ENCODE measurements at regions of chr7 and their contacts with region 1.

Region 1: GRCh38 chr7:100719523-100720319 is 547 bp upstream of the EPO start:
- DNase-seq: no peak
- ATAC-seq: peak; percentile 17
- H3K4me3 Mint-ChIP-seq: peak overlapping the region; percentile 65
- H3K27ac Mint-ChIP-seq: no peak overlapping the region
- H3K4me1 Mint-ChIP-seq: peaks cover 4% of the 10 kb centered on the region
- H3K27me3 Mint-ChIP-seq: peaks cover 62% of the 10 kb centered on the region
- CTCF ChIP-seq: no peak

Region 2: DNA sequence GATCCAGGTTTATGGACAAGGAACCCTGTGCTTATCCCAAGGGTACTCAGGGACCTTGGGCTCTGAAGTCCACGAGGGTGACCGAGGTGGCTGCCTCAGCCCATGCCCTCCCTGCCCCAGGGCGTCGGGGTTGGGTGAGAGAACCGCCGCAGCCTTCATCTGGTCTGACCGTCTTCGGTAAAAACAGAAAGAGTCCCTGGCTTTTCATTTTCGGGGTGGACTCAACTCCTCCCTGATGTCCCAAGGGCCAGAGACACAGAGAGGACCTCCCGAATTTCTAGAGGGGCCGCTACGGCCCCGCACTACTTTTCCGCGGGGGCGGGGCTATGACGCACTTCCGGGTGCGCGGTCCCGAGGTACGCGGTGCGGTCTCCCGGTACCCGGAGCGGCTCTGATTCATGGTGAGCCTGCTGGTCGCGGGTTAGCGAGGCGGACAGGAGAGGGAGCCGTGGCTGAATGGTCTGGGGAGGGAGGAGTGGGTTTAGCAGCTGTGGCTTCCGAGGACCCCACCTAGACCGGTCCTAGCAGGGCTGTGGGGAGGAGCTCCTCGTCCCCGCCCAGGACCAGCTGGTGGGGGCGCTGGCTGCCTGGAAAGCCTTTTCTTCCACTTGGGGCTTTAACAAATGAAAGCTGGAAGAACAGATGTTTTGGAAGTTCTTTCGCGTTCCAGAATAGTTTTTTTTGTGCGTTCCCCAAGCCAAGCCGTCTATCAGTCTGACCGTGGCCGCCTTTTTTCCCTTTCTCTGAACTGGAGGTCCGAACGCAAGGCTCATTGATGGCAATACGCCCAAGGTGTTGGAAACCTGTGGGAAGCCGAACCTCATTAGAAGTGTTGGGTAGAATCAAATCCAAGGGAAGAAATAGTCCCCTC is 670.0 kb before region 1 on chr7 and contains the start of gene ZSCAN21:
- CTCF ChIA-PET with region 1: no interaction called
- POLR2A ChIA-PET with region 1: no interaction called
- DNase-seq: peak; percentile 89
- ATAC-seq: peak; percentile 91
- H3K4me3 Mint-ChIP-seq: peak within 1 kb of the TSS; percentile 88
- H3K27ac Mint-ChIP-seq: peak within 1 kb of the TSS; percentile 96
- H3K4me1 Mint-ChIP-seq: peaks cover 13% of the 10 kb centered on the region
- H3K27me3 Mint-ChIP-seq: no peaks in the 10 kb centered on the region
- CTCF ChIP-seq: no peak
- total RNA-seq, gene ZSCAN21: 25.5 to 27.2 TPM (median 26.2 TPM) in 3 replicates

Region 3: DNA sequence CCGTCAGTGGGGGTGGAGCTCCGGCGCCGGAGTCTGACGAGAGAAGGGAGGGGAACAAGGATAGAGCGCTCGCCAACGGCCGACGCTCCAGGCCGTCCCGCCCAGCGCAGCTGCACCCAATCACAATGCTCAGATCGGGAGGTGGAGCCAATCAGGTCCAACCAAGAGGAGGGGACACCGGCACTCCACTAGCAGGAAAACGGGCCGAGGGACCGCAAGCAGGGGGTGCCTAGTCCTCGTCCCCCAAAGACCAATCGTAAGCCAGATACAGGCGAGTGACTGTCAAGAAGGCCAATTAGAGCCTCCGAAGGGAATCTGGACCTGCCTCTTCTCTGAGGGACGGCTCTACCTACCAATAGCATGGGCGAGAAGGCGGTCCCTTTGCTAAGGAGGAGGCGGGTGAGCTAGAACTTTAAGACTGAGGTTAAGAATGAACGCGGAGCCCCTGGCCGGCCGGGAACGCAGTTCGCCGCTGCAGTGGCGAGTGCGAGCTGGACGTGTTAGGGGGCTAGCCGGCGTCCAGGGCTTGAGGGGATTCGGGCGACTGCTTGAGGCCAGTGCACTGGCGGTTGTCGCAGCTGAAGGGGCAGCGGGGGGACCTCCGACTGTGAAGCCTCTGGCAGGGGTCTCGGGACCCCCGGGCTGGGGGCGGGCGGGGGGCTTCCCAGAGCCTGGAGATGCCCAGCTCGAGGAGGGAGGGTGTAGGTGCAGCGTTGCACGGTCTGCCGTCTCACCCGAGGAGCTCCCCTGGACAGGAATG is 133.3 kb before region 1 on chr7 and contains the start of gene FBXO24:
- CTCF ChIA-PET with region 1: interaction called, 11 read pairs
- POLR2A ChIA-PET with region 1: interaction called, 5 read pairs
- DNase-seq: peak; percentile 99
- ATAC-seq: peak; percentile 85
- H3K4me3 Mint-ChIP-seq: peak within 1 kb of the TSS; percentile 99
- H3K27ac Mint-ChIP-seq: peak within 1 kb of the TSS; percentile 100
- H3K4me1 Mint-ChIP-seq: peaks cover 42% of the 10 kb centered on the region
- H3K27me3 Mint-ChIP-seq: peaks cover 30% of the 10 kb centered on the region
- CTCF ChIP-seq: no peak
- total RNA-seq, gene FBXO24: 0.70 to 1.3 TPM (median 0.94 TPM) in 3 replicates

Region 4: DNA sequence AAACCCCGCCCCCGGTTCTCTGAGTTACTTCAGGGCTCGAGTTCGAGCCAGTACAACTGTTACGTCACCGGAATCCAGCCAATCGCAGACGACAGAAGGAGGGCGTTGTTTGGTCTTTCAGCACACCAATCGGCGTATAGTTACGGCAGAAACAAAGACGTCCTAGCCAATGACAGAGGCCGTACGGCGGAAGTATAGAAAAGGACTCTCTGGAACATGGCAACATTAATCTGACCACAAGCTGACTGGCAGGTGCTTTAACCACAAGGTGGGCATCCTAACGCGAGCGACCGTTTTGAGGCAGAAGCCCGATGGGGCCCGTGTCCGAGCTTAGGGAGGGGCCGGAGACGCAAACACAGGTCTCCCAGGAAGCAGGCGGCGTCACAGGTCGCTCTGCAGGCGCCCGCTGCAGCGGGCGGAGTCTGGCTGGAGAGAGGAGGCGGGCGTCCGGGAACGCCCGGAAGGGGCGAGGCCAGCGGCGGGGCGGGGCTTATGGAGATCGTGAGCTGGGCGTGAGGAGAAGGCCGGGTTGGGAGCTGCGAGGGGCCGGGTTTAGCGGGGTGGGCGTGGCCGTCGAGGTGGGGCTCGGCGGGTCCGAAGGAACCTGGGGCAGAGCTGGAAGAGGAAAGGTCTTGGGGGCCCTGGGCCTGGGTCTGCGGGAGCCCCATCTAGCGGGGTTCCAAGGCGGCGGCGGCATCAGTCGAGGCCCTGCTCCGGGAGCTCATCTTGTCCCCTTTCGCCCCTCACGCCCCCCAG is 107.6 kb before region 1 on chr7 and contains the start of gene MOSPD3:
- CTCF ChIA-PET with region 1: interaction called, 24 read pairs
- POLR2A ChIA-PET with region 1: interaction called, 4 read pairs
- DNase-seq: peak; percentile 99
- ATAC-seq: peak; percentile 93
- H3K4me3 Mint-ChIP-seq: peak within 1 kb of the TSS; percentile 94
- H3K27ac Mint-ChIP-seq: peak within 1 kb of the TSS; percentile 100
- H3K4me1 Mint-ChIP-seq: peaks cover 6% of the 10 kb centered on the region; the same call in 1 of the 2 replicates
- H3K27me3 Mint-ChIP-seq: no peaks in the 10 kb centered on the region; the same call in 1 of the 2 replicates
- CTCF ChIP-seq: no peak
- total RNA-seq, gene MOSPD3: 21.9 to 22.4 TPM (median 22.0 TPM) in 3 replicates

Region 5: GRCh38 chr7:100691676-100692577 is 27.8 kb before region 1 on chr7:
- CTCF ChIA-PET with region 1: interaction called, 14 read pairs
- POLR2A ChIA-PET with region 1: no interaction called
- DNase-seq: peak; percentile 91
- ATAC-seq: peak; percentile 78
- H3K4me3 Mint-ChIP-seq: peak overlapping the region; percentile 96
- H3K27ac Mint-ChIP-seq: peak overlapping the region; percentile 97
- H3K4me1 Mint-ChIP-seq: peaks cover 42% of the 10 kb centered on the region
- H3K27me3 Mint-ChIP-seq: no peaks in the 10 kb centered on the region
- CTCF ChIP-seq: peak; percentile 91

Region 6: DNA sequence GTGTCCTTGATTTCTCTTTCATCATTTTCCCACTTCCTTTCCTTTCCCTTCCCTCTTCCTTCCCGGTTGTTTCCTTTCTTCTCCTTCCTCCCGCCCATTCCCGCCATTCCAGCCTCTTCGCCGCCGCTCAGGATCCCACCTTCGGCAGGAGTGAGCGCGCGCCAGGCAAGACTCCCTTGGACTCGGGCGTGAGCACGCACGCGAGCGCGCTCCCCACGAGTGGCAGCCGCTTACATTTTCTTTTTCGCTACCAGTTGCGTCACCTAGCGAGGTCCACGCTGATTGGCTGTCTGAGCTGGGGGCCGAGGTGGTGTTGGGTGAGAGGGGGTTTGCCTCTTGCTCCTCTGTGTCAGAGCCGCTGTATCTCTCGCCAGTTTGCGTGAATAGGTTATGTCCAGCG is 25.5 kb after region 1 on chr7:
- CTCF ChIA-PET with region 1: interaction called, 11 read pairs
- POLR2A ChIA-PET with region 1: no interaction called
- DNase-seq: peak; percentile 31
- ATAC-seq: peak; percentile 47
- H3K4me3 Mint-ChIP-seq: peak overlapping the region; percentile 62
- H3K27ac Mint-ChIP-seq: peak overlapping the region; percentile 28
- H3K4me1 Mint-ChIP-seq: no peaks in the 10 kb centered on the region
- H3K27me3 Mint-ChIP-seq: peaks cover 17% of the 10 kb centered on the region
- CTCF ChIP-seq: no peak

Region 7: DNA sequence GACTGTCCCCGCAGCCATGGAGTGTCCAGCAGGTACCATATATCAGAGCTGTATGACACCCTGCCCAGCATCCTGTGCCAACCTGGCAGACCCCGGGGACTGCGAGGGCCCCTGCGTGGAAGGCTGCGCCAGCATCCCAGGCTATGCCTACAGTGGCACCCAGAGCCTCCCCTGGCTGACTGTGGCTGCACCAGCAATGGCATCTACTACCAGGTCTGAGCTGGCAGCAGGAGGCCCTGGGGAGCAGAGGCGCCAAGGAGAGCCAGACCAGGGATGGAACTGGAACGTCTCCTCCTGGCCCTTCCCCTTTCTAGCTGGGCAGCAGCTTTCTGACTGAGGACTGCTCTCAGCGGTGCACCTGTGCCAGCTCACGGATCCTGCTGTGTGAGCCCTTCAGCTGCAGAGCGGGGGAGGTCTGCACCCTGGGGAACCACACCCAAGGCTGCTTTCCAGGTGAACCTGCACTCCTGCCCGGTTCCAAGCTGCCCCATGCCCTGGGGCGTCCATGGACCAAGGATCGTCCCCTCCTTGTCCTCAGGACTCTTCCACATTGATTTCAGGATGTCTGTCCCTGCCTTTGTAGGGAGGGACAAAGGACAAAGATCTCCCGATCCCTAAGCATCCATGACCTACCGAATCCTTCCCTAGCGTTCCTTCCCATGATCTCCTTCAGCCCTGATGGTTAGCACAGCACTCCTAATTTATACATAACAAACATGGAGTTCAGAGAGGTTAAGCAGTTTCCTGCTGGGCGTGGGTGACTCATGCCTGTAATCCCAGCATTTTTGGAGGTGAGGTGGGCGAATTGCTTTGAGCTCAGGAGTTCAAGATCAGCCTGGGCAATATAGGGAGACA is 74.3 kb after region 1 on chr7:
- CTCF ChIA-PET with region 1: interaction called, 26 read pairs
- POLR2A ChIA-PET with region 1: interaction called, 3 read pairs
- DNase-seq: no peak
- ATAC-seq: peak; percentile 36
- H3K4me3 Mint-ChIP-seq: peak overlapping the region; percentile 33; the same call in 1 of the 2 replicates
- H3K27ac Mint-ChIP-seq: no peak overlapping the region
- H3K4me1 Mint-ChIP-seq: peaks cover 15% of the 10 kb centered on the region
- H3K27me3 Mint-ChIP-seq: no peaks in the 10 kb centered on the region; the same call in 1 of the 2 replicates
- CTCF ChIP-seq: no peak

Region 8: DNA sequence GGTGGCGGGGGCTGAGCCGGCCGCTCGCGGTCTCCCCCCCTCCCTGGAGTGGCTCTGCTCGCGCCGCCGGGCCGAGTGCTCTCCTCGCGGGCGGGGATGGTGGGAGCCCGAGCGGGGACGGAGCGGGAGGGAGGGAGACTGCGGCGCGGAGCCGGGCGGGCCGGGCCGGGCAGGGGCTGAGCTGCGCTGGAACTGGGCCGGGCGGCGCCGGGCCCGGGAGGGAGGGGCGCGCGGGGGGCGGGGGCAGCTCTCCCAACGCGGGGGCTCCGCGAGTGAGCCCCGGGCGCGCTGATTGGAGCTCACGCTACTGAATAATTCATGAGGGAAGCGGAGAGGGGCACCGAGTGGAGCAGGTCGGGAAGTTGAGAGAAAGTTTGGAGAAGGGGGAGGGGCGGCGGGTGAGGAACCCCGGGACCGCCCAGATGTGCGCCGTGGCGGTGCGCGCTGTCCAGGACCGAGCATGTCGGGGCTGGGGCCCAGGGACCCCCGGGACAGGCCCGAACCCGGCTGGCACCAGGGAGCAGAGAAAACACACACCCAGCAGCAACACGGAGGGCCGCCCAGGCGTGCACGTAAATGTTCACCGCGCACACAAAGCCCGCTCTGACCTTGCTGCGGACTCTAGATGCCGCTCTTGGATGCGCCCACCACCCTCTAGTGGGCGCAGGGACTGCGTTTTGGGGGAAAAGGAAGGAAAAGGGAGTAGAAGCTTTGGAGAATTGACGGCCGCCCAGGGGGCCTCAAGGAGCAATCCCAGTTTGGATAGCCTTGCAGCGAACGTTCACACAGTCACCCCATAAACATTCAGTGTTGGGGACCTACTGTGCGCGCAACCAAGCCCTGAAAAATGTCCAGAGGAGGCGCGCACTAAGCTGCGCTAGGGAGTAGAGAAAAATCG is 107.9 kb after region 1 on chr7 and contains the start of gene EPHB4:
- CTCF ChIA-PET with region 1: interaction called, 15 read pairs
- POLR2A ChIA-PET with region 1: interaction called, 4 read pairs
- DNase-seq: peak; percentile 90
- ATAC-seq: peak; percentile 82
- H3K4me3 Mint-ChIP-seq: peak within 1 kb of the TSS; percentile 98
- H3K27ac Mint-ChIP-seq: peak within 1 kb of the TSS; percentile 99
- H3K4me1 Mint-ChIP-seq: peaks cover 28% of the 10 kb centered on the region
- H3K27me3 Mint-ChIP-seq: no peaks in the 10 kb centered on the region
- CTCF ChIP-seq: no peak
- total RNA-seq, gene EPHB4: 99.7 to 120 TPM (median 104 TPM) in 3 replicates

Measured in WTC11 (cell line).